ENCODE measurements at regions of chr16 and their contacts with region 1.

Region 1: GRCh38 chr16:30628627-30629540 is 18.7 kb upstream of the ZNF689 start:
- DNase-seq: peak; percentile 73 to 86
- ATAC-seq: peak; percentile 95 to 99
- H3K4me3 ChIP-seq: peak overlapping the region; percentile 34
- H3K27ac ChIP-seq: peak overlapping the region; percentile 58 to 78
- H3K4me1 ChIP-seq: no peaks in the 10 kb centered on the region
- CTCF ChIP-seq: peak; percentile 87
- EP300 ChIP-seq: no peak
- POLR2A ChIP-seq: no peak
- RAD21 ChIP-seq: peak; percentile 81

Region 2: GRCh38 chr16:30534368-30535105 is 94.3 kb before region 1 on chr16 and contains the start of gene ZNF747:
- CTCF ChIA-PET with region 1: interaction called, 12 read pairs
- POLR2A ChIA-PET with region 1: no interaction called
- DNase-seq: peak; percentile 77 to 90
- ATAC-seq: peak; percentile 91 to 93
- H3K4me3 ChIP-seq: peak within 1 kb of the TSS; percentile 52
- H3K27ac ChIP-seq: peak within 1 kb of the TSS; percentile 89 to 93
- H3K4me1 ChIP-seq: peaks cover 13% of the 10 kb centered on the region; the same call in 2 of the 3 replicates
- CTCF ChIP-seq: no peak
- EP300 ChIP-seq: no peak
- POLR2A ChIP-seq: peak; percentile 72
- RAD21 ChIP-seq: no peak; a peak in 1 of 5 replicates
- polyA plus RNA-seq, gene ZNF747: 4.8 and 5.2 TPM in 2 replicates

Region 3: DNA sequence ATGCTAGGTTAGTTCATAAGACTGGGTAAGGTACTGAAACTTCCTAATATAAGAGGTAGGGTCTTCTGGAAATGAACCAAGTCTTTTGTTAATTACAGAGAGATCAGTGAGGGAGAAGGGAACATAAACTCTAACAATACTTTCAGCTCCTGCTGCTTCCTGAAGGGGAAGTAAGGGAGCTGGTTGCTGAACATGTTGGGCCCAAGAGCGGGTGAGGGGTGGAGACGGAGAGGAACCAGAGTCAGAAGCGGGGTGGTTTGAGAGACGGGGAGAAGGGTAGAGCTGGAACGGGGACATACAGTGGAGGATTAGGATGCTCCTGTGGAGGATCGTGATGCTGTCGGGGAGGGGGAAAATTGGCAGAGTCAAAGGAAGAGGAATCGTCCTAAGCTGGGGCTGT is 82.8 kb before region 1 on chr16:
- CTCF ChIA-PET with region 1: no interaction called
- POLR2A ChIA-PET with region 1: no interaction called
- DNase-seq: no peak
- ATAC-seq: no peak
- H3K4me3 ChIP-seq: no peak overlapping the region
- H3K27ac ChIP-seq: no peak overlapping the region
- H3K4me1 ChIP-seq: peaks cover 17% of the 10 kb centered on the region
- CTCF ChIP-seq: no peak
- EP300 ChIP-seq: no peak
- POLR2A ChIP-seq: no peak
- RAD21 ChIP-seq: no peak

Region 4: DNA sequence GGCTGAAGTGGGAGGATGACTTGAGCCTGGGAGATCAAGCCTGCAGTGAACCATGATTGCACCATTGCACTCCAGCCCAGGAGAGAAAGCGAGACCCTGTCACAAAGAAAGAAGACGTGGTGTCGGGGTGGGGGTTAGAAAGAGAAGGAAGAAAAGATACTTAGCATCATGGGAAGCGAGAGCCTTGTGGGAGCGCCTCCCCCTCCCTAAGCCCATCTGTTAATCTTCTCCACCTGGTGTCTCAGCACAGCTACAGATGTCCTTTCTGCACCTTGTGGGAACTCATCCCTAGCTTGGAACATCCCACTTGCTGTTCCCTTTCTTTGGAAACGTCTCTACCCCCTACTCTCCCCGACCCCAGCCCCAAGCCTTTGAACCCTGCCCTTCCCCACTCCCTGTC is 63.4 kb before region 1 on chr16:
- CTCF ChIA-PET with region 1: interaction called, 11 read pairs
- POLR2A ChIA-PET with region 1: interaction called, 4 read pairs
- DNase-seq: no peak
- ATAC-seq: no peak
- H3K4me3 ChIP-seq: no peak overlapping the region
- H3K27ac ChIP-seq: 0 out of 6 replicates have a peak overlapping the region, but pooled peaks of 1 of the 2 experiments have one; percentile 11
- H3K4me1 ChIP-seq: peaks cover 26% of the 10 kb centered on the region
- CTCF ChIP-seq: no peak
- EP300 ChIP-seq: no peak
- POLR2A ChIP-seq: no peak
- RAD21 ChIP-seq: no peak

Region 5: DNA sequence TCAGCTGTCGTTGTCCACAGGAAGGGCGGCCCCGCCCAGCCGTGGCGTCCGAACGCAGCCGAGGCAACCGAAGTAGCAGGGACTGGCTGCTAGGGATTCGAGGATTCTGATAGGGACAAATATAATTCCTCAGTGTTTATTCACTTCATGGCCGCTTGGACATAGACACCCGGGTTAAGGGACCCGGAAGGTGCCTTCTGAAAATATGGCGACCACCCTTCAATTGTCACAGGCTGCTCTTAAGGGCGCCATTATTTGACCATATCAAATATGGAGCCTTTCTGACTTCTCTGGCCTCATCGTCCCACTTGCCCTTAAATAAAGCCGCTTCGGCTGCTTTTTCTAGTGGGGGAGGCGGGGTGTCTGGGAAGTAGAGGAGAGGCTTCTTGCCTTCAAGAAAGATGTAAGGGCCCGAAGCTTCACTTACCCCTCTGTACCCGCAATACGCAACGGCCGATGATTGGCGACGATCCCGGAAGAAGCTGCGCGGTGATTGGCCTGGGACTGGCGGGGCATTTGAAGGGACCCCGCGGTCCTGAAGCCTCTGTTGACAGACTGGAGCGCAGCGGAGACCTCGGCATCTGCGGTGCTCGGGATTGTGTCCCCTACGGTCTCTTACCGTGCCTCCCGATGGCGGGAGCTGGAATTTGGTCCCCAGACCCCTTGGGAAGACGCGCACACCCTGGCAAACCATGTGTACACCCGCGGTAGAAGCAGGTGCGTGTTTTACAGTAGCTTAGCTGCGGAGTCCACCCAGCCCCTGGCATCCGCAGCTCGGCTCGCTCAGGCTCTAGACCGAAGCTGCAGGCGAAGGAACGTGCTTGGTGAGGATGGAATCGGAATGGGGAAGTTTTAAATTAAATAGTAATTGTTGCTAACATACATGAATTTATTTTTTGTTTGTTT is 56.9 kb before region 1 on chr16 and contains the start of gene ZNF688:
- CTCF ChIA-PET with region 1: interaction called, 11 read pairs
- POLR2A ChIA-PET with region 1: interaction called, 5 read pairs
- DNase-seq: peak; percentile 95 to 97
- ATAC-seq: peak; percentile 89 to 92
- H3K4me3 ChIP-seq: peak within 1 kb of the TSS; percentile 53
- H3K27ac ChIP-seq: peak within 1 kb of the TSS; percentile 87 to 98
- H3K4me1 ChIP-seq: peaks cover 42% of the 10 kb centered on the region
- CTCF ChIP-seq: no peak
- EP300 ChIP-seq: no peak
- POLR2A ChIP-seq: no peak
- RAD21 ChIP-seq: no peak
- polyA plus RNA-seq, gene ZNF688: 4.8 and 6.7 TPM in 2 replicates

Region 6: GRCh38 chr16:30602616-30603277 is 26.1 kb before region 1 on chr16:
- CTCF ChIA-PET with region 1: interaction called, 27 read pairs
- POLR2A ChIA-PET with region 1: interaction called, 4 read pairs
- DNase-seq: no peak
- ATAC-seq: no peak; a peak in 1 of 6 replicates
- H3K4me3 ChIP-seq: no peak overlapping the region
- H3K27ac ChIP-seq: no peak overlapping the region
- H3K4me1 ChIP-seq: no peaks in the 10 kb centered on the region
- CTCF ChIP-seq: no peak
- EP300 ChIP-seq: no peak
- POLR2A ChIP-seq: no peak
- RAD21 ChIP-seq: no peak

Region 7: DNA sequence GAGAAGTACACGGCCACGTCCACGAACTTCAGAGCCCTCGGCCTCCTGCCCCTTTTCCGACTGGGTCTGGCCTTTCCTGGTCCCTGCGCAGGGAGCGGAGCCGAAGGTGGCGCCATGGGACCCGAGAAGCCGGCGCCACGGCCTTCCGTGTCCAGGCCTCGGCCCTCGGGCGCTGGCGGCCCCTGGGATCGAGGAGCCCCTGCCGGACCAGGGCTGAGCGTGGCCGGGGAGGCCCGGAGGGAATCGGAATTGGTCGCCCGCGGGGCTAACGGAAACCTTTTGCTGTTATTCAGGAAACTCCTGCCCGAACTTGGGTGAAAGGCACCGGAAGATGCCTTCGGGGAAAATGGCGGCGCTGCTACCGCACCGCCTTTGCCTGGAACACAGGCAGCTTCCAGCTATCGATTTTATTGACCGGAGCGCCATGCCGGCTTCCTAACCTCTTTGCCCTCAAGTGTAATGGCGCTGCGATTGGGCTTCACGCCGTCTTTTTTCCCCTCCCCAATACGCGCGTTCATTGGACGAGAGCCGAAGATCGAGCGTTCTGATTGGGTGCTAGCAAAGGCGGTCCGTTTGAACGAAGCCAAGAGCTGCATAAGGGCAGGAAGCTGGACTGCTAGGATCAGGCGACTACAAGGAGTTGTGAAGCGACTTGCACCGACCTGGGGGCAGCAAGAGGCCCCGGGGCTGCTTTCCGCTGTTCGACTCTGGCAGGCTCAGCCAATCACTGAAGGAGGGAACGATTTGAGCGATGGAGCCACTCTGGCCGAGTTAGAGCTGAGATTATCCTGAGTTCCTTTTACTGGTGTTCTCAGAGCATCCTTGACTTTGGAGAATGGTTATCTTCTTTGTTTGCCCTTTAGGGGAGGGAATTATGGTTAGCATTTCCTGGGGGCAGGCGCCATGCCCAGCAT is 18.7 kb before region 1 on chr16 and contains the start of gene ZNF689:
- CTCF ChIA-PET with region 1: interaction called, 120 read pairs
- POLR2A ChIA-PET with region 1: no interaction called
- DNase-seq: peak; percentile 98
- ATAC-seq: peak; percentile 95
- H3K4me3 ChIP-seq: peak within 1 kb of the TSS; percentile 92
- H3K27ac ChIP-seq: peak within 1 kb of the TSS; percentile 92 to 96
- H3K4me1 ChIP-seq: peaks cover 10% of the 10 kb centered on the region; the same call in 1 of the 3 replicates
- CTCF ChIP-seq: no peak
- EP300 ChIP-seq: no peak
- POLR2A ChIP-seq: 0 out of 2 replicates have a peak, but pooled peaks have one; percentile 23
- RAD21 ChIP-seq: no peak
- polyA plus RNA-seq, gene ZNF689: 6.8 and 7.1 TPM in 2 replicates

Region 8: GRCh38 chr16:30644334-30644830 is 15.5 kb after region 1 on chr16:
- CTCF ChIA-PET with region 1: interaction called, 12 read pairs
- POLR2A ChIA-PET with region 1: interaction called, 9 read pairs
- DNase-seq: no peak
- ATAC-seq: no peak
- H3K4me3 ChIP-seq: no peak overlapping the region
- H3K27ac ChIP-seq: no peak overlapping the region
- H3K4me1 ChIP-seq: no peaks in the 10 kb centered on the region
- CTCF ChIP-seq: no peak
- EP300 ChIP-seq: no peak
- POLR2A ChIP-seq: no peak
- RAD21 ChIP-seq: no peak

Region 9: DNA sequence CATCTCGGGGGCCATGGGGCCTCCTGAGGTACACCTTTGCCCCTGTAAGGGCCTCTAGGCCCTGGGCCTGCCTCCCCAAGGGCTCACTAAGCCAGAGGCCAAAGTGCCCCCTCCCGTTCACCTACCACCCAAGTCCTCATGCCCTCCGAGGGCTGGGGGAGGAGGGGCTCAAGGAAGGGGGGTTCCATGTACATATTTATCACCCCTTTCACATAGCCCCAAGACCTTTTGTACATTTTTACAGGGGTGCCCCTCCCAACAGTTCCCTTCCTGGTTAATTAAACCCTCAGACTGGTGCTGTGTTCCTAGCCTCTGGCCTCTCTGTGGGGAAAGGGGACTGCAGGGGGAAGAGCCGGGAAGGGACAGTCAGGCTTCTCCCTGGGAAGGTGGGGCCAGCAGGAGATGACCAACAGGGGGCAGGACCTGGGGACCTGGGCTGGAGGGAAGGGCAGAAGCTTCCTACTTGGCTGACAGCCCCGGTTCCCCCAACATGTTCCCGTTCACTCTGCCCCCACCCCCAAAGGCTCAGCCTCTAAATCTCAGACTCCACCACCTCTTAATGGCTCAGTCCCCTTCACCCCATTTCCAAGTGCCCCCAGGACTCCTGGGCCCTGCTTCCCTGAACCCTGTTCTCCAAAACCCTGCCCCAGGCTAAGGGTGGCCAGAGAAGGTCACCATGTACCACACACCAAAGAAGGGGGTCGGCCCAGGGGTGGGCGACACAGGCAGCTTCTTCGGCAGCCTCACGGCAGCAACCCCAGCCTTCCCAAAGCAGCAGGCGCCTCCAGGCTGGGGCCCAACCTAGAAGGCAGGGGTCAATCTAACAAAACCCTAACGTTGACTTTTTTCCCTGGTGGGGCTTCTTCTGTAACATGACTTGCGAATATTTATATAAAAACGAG is 41.3 kb after region 1 on chr16:
- CTCF ChIA-PET with region 1: no interaction called
- POLR2A ChIA-PET with region 1: no interaction called
- DNase-seq: no peak
- ATAC-seq: peak; percentile 51 to 60; a peak in 5 of 6 replicates
- H3K4me3 ChIP-seq: no peak overlapping the region
- H3K27ac ChIP-seq: no peak overlapping the region
- H3K4me1 ChIP-seq: no peaks in the 10 kb centered on the region
- CTCF ChIP-seq: no peak
- EP300 ChIP-seq: no peak
- POLR2A ChIP-seq: no peak
- RAD21 ChIP-seq: no peak

Region 10: GRCh38 chr16:30844671-30845449 is 216.0 kb after region 1 on chr16:
- CTCF ChIA-PET with region 1: no interaction called
- POLR2A ChIA-PET with region 1: no interaction called
- DNase-seq: peak; percentile 87 to 90
- ATAC-seq: peak; percentile 89 to 97
- H3K4me3 ChIP-seq: no peak overlapping the region
- H3K27ac ChIP-seq: peak overlapping the region; percentile 50 to 58; a peak in 5 of 6 replicates
- H3K4me1 ChIP-seq: peaks cover 11% of the 10 kb centered on the region
- CTCF ChIP-seq: peak; percentile 88
- EP300 ChIP-seq: no peak
- POLR2A ChIP-seq: no peak
- RAD21 ChIP-seq: peak; percentile 84 to 91

Region 11: GRCh38 chr16:30934827-30935557 is 306.1 kb after region 1 on chr16:
- CTCF ChIA-PET with region 1: no interaction called
- POLR2A ChIA-PET with region 1: no interaction called
- DNase-seq: peak; percentile 45 to 72
- ATAC-seq: peak; percentile 57 to 84; a peak in 4 of 6 replicates
- H3K4me3 ChIP-seq: no peak overlapping the region
- H3K27ac ChIP-seq: no peak overlapping the region
- H3K4me1 ChIP-seq: peaks cover 4% of the 10 kb centered on the region; the same call in 1 of the 3 replicates
- CTCF ChIP-seq: peak; percentile 40
- EP300 ChIP-seq: no peak
- POLR2A ChIP-seq: no peak
- RAD21 ChIP-seq: 0 out of 5 replicates have a peak, but pooled peaks have one; percentile 15 to 22